ENCODE measurements at regions of chr6 and their contacts with region 1.

Region 1: GRCh38 chr6:149028767-149029405 is 282.1 kb downstream of the UST start:
- DNase-seq: peak in 1 of 3 donors; percentile 76
- ATAC-seq: peak; percentile 74 to 90 (median 83)
- H3K4me3 ChIP-seq: no peak overlapping the region
- H3K27ac ChIP-seq: no peak overlapping the region
- H3K4me1 ChIP-seq: peaks cover 0 to 16% (median 8%) of the 10 kb centered on the region in 4 donors
- H3K27me3 ChIP-seq: no peaks in the 10 kb centered on the region
- CTCF ChIP-seq: peak; percentile 67 to 89 (median 74)
- POLR2A ChIP-seq: no peak

Region 2: GRCh38 chr6:149515494-149515893 is 486.6 kb after region 1 on chr6:
- intact Hi-C with region 1: loop called in 1 of 2 experiments (anchors 5 kb)
- DNase-seq: no peak
- ATAC-seq: no peak
- H3K4me3 ChIP-seq: no peak overlapping the region
- H3K27ac ChIP-seq: no peak overlapping the region
- H3K4me1 ChIP-seq: no peaks in the 10 kb centered on the region
- H3K27me3 ChIP-seq: no peaks in the 10 kb centered on the region
- CTCF ChIP-seq: no peak
- POLR2A ChIP-seq: no peak

Measured in right lobe of liver (tissue), 6 donors.